B cell (primary cell): ENCODE measurements at regions of chr2 and their contacts with region 1.

Region 1: DNA sequence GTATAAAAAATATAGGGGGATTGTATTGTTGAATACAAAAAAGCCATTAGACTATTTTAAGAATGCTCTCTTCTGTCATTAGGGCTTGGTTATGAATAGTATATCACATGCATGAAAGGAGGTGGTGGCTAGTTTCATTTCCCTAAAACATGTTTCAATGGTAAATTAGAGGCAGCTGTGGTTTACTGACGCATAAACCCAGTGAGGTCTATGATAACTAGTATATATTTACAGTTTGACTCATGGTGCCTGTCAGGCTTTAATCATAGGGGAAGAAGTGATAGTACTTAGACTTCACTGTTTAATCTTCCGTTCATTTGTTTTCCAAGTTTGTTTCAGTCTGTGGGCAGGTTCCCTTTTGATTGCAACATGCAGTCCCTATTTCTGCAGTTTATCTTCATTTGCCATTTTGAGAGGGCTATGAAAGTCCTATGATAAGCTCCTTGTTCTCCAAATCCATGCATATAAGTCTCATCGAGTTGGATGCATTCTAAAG is 55.1 kb upstream of the MAP4K3 start:
- DNase-seq: peak; percentile 91
- ATAC-seq: peak; percentile 91
- H3K4me3 ChIP-seq: peak overlapping the region in 3 of 5 experiments; percentile 13 to 56 (median 26)
- H3K4me3 Mint-ChIP-seq: peak overlapping the region; percentile 81
- H3K27ac ChIP-seq: peak overlapping the region; percentile 80 to 81
- H3K27ac Mint-ChIP-seq: peak overlapping the region; percentile 88
- H3K4me1 ChIP-seq: peaks cover 35 to 43% of the 10 kb centered on the region in 2 donors
- H3K4me1 Mint-ChIP-seq: peaks cover 44% of the 10 kb centered on the region
- H3K27me3 ChIP-seq: peaks cover 0 to 21% (median 4%) of the 10 kb centered on the region in 4 experiments
- H3K27me3 Mint-ChIP-seq: peaks cover 18% of the 10 kb centered on the region
- CTCF ChIP-seq: no peak

Region 2: DNA sequence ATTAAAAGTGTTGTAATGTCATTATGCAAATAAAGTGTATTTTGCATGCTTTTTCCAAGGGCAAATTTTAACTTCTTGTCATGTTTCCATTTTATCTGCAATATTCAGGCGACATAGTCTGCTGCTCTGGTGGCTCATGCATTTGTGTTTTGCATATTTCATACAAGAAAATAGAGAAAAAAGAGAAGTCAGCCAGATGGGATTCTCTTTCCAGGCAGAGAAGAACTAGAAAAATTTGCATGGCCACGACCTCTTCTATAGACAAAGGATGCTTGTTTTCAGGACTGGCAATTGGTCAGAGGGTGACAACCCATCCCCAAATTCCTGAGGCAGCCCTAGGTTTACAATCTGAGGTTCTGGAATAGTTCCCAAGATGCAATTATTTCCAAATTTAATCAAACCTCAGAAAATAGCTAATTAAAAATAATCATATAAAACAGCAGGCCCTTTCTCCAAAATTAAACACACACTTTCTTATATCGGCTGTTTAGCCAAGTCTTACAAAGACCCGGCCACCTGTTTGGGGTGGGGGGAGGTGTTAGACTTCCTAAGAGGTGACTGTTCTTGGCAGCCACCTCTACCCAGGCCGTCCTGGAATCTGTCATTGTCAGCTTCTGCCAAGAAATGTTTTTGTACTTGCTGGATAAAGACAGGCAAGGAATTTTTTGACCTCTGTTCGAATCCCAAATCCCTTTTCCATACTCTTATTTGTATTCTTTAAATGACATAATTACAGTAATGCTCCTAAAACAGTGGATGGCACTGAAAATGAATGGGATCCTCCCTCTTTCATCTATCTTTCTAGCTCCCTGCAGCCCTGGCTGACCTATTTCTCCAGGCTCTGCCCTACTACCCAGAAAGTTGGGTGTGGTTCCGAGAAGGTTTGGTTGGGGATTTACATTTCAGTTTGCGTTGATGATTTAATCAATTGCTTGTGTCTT is 350.5 kb before region 1 on chr2:
- CTCF ChIA-PET with region 1: no interaction called
- POLR2A ChIA-PET with region 1: no interaction called
- intact Hi-C with region 1: loop called (anchors 5 kb)
- DNase-seq: peak; percentile 74
- ATAC-seq: peak; percentile 85
- H3K4me3 ChIP-seq: peak overlapping the region in 1 of 5 experiments; percentile 30
- H3K4me3 Mint-ChIP-seq: peak overlapping the region; percentile 69
- H3K27ac ChIP-seq: peak overlapping the region; percentile 50 to 59
- H3K27ac Mint-ChIP-seq: peak overlapping the region; percentile 75
- H3K4me1 ChIP-seq: peaks cover 33 to 37% of the 10 kb centered on the region in 2 donors
- H3K4me1 Mint-ChIP-seq: peaks cover 41% of the 10 kb centered on the region
- H3K27me3 ChIP-seq: no peaks in the 10 kb centered on the region
- H3K27me3 Mint-ChIP-seq: no peaks in the 10 kb centered on the region
- CTCF ChIP-seq: no peak

Region 3: DNA sequence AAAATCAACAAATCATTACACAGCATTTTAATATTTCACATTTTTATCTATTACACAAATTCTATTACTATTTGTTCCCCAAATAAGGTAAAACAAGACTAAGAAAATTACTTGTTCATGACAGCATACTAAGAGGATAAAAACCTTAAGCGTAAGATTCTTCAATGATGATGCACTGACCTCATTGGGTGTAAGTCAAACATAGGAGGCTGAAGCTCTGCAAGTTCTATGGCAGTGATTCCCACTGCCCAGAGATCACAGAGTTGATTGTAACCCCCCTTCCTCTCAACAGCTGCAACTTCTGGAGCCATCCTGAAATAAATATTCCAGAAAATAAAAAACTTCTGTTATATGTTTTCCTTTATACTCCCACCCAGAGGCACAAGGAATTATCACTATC is 166.2 kb before region 1 on chr2:
- CTCF ChIA-PET with region 1: no interaction called
- POLR2A ChIA-PET with region 1: no interaction called
- intact Hi-C with region 1: no loop called
- DNase-seq: no peak
- ATAC-seq: no peak
- H3K4me3 ChIP-seq: no peak overlapping the region
- H3K4me3 Mint-ChIP-seq: no peak overlapping the region
- H3K27ac ChIP-seq: no peak overlapping the region
- H3K27ac Mint-ChIP-seq: no peak overlapping the region
- H3K4me1 ChIP-seq: no peaks in the 10 kb centered on the region
- H3K4me1 Mint-ChIP-seq: no peaks in the 10 kb centered on the region
- H3K27me3 ChIP-seq: no peaks in the 10 kb centered on the region
- H3K27me3 Mint-ChIP-seq: no peaks in the 10 kb centered on the region
- CTCF ChIP-seq: no peak

Region 4: GRCh38 chr2:39356922-39357639 is 135.1 kb before region 1 on chr2:
- CTCF ChIA-PET with region 1: no interaction called
- POLR2A ChIA-PET with region 1: no interaction called
- intact Hi-C with region 1: no loop called
- DNase-seq: no peak
- ATAC-seq: no peak
- H3K4me3 ChIP-seq: no peak overlapping the region
- H3K4me3 Mint-ChIP-seq: no peak overlapping the region
- H3K27ac ChIP-seq: no peak overlapping the region
- H3K27ac Mint-ChIP-seq: no peak overlapping the region
- H3K4me1 ChIP-seq: no peaks in the 10 kb centered on the region
- H3K4me1 Mint-ChIP-seq: peaks cover 3% of the 10 kb centered on the region
- H3K27me3 ChIP-seq: no peaks in the 10 kb centered on the region
- H3K27me3 Mint-ChIP-seq: no peaks in the 10 kb centered on the region
- CTCF ChIP-seq: no peak

Region 5: GRCh38 chr2:39379643-39380524 is 112.3 kb before region 1 on chr2:
- CTCF ChIA-PET with region 1: interaction called, 3 read pairs
- POLR2A ChIA-PET with region 1: no interaction called
- intact Hi-C with region 1: loop called (anchors 1 kb)
- DNase-seq: peak; percentile 63
- ATAC-seq: peak; percentile 48
- H3K4me3 ChIP-seq: no peak overlapping the region
- H3K4me3 Mint-ChIP-seq: no peak overlapping the region
- H3K27ac ChIP-seq: no peak overlapping the region
- H3K27ac Mint-ChIP-seq: peak overlapping the region; percentile 56
- H3K4me1 ChIP-seq: peaks cover 9% of the 10 kb centered on the region in 2 donors
- H3K4me1 Mint-ChIP-seq: peaks cover 20% of the 10 kb centered on the region
- H3K27me3 ChIP-seq: no peaks in the 10 kb centered on the region
- H3K27me3 Mint-ChIP-seq: no peaks in the 10 kb centered on the region
- CTCF ChIP-seq: peak; percentile 76

Region 6: GRCh38 chr2:39476524-39476923 is 15.6 kb before region 1 on chr2:
- CTCF ChIA-PET with region 1: interaction called, 5 read pairs
- POLR2A ChIA-PET with region 1: no interaction called
- intact Hi-C with region 1: loop called (anchors 1 kb)
- DNase-seq: peak; percentile 77
- ATAC-seq: peak; percentile 96
- H3K4me3 ChIP-seq: peak overlapping the region in 1 of 5 experiments; percentile 22
- H3K4me3 Mint-ChIP-seq: peak overlapping the region; percentile 75
- H3K27ac ChIP-seq: peak overlapping the region; percentile 37 to 72
- H3K27ac Mint-ChIP-seq: peak overlapping the region; percentile 91
- H3K4me1 ChIP-seq: peaks cover 16 to 20% of the 10 kb centered on the region in 2 donors
- H3K4me1 Mint-ChIP-seq: peaks cover 21% of the 10 kb centered on the region
- H3K27me3 ChIP-seq: no peaks in the 10 kb centered on the region
- H3K27me3 Mint-ChIP-seq: no peaks in the 10 kb centered on the region
- CTCF ChIP-seq: no peak

Region 7: DNA sequence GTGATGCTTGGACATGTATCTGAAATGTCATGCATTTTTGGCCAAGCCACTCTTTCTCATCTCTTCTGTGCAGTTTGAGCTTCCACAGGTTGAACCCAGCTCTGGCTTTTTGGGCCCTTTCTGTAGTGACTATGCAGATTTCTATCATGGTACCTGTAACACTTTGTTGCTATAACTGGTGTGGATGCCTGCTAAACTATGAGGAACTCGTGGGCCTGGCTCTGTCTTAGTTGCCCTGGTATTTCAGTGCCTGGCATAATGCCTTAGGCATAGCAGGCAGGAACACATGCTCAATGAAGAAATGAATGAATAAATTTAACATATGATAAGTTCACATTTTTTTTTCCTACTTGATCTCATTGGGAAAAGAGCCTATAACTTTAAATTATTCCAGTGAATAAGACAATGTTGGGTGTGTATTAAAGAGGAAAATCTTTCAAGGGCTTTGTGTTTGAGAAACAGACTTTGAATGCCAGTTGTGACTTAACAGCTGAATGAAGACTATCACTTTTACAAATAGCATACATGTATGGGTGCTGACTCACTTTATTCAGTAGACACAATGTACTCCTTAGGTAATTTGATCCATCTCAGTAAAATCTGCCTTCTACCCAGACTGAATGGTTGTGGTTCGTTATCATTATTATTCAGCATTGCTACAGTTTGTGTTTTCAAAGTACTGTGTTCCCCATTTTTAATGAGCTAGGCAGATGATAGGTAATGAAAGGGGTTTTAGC is 31.3 kb after region 1 on chr2:
- CTCF ChIA-PET with region 1: no interaction called
- POLR2A ChIA-PET with region 1: no interaction called
- intact Hi-C with region 1: loop called (anchors 1 kb)
- DNase-seq: no peak
- ATAC-seq: no peak
- H3K4me3 ChIP-seq: no peak overlapping the region
- H3K4me3 Mint-ChIP-seq: no peak overlapping the region
- H3K27ac ChIP-seq: no peak overlapping the region
- H3K27ac Mint-ChIP-seq: no peak overlapping the region
- H3K4me1 ChIP-seq: peaks cover 29 to 30% of the 10 kb centered on the region in 2 donors
- H3K4me1 Mint-ChIP-seq: peaks cover 37% of the 10 kb centered on the region
- H3K27me3 ChIP-seq: peaks cover 0 to 2% (median 0%) of the 10 kb centered on the region in 4 experiments
- H3K27me3 Mint-ChIP-seq: no peaks in the 10 kb centered on the region
- CTCF ChIP-seq: no peak